ENCODE measurements at regions of chr1 and their contacts with region 1.

Region 1: GRCh38 chr1:221203224-221204054 is 324.2 kb downstream of the HLX start:
- DNase-seq: peak; percentile 94
- ATAC-seq: peak; percentile 95
- H3K4me3 ChIP-seq: no peak overlapping the region
- H3K27ac ChIP-seq: peak overlapping the region; percentile 8; the same call in 1 of the 2 replicates
- H3K4me1 ChIP-seq: peaks cover 17% of the 10 kb centered on the region
- H3K27me3 ChIP-seq: no peaks in the 10 kb centered on the region
- CTCF ChIP-seq: peak; percentile 87

Region 2: GRCh38 chr1:220810179-220810653 is 393.2 kb before region 1 on chr1:
- CTCF ChIA-PET with region 1: no interaction called
- POLR2A ChIA-PET with region 1: no interaction called
- intact Hi-C with region 1: loop called (anchors 5 kb)
- DNase-seq: peak; percentile 83
- ATAC-seq: peak; percentile 72
- H3K4me3 ChIP-seq: no peak overlapping the region
- H3K27ac ChIP-seq: no peak overlapping the region
- H3K4me1 ChIP-seq: no peaks in the 10 kb centered on the region
- H3K27me3 ChIP-seq: no peaks in the 10 kb centered on the region
- CTCF ChIP-seq: peak; percentile 95

Region 3: GRCh38 chr1:220879076-220879508 is 324.3 kb before region 1 on chr1 and contains the start of gene HLX:
- CTCF ChIA-PET with region 1: interaction called, 5 read pairs
- POLR2A ChIA-PET with region 1: no interaction called
- intact Hi-C with region 1: loop called (anchors 1 kb)
- DNase-seq: peak; percentile 96
- ATAC-seq: peak; percentile 89
- H3K4me3 ChIP-seq: peak within 1 kb of the TSS; percentile 85
- H3K27ac ChIP-seq: peak within 1 kb of the TSS; percentile 20
- H3K4me1 ChIP-seq: peaks cover 16% of the 10 kb centered on the region; the same call in 1 of the 2 replicates
- H3K27me3 ChIP-seq: no peaks in the 10 kb centered on the region
- CTCF ChIP-seq: no peak
- total RNA-seq, gene HLX: 4.0 and 8.1 TPM in 2 replicates

Region 4: GRCh38 chr1:220990427-220991339 is 212.8 kb before region 1 on chr1:
- CTCF ChIA-PET with region 1: no interaction called
- POLR2A ChIA-PET with region 1: no interaction called
- intact Hi-C with region 1: loop called (anchors 5 kb)
- DNase-seq: peak; percentile 85
- ATAC-seq: peak; percentile 87
- H3K4me3 ChIP-seq: no peak overlapping the region
- H3K27ac ChIP-seq: peak overlapping the region; percentile 56
- H3K4me1 ChIP-seq: peaks cover 20% of the 10 kb centered on the region
- H3K27me3 ChIP-seq: no peaks in the 10 kb centered on the region
- CTCF ChIP-seq: peak; percentile 63

Region 5: DNA sequence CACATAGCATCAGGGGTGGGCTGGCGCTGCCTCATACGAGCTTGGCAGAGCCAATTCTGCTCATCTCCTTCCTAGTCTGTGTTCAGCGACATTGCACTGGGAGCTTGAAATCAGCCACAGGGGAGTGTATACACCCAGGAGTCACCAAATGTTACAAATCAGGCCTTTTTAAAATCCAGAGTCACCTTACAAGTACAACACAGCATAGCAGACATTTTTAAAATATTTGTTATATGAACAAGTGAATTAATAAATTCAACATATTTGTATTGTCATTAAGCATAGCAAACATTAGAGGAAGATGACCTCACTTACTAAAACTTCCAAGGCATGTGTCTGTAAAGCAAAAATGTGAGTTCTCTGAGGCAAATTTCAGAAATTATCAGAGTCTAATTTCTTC is 114.2 kb before region 1 on chr1:
- CTCF ChIA-PET with region 1: interaction called, 5 read pairs
- POLR2A ChIA-PET with region 1: no interaction called
- intact Hi-C with region 1: loop called (anchors 1 kb)
- DNase-seq: peak; percentile 89
- ATAC-seq: peak; percentile 86
- H3K4me3 ChIP-seq: peak overlapping the region; percentile 17; the same call in 1 of the 2 replicates
- H3K27ac ChIP-seq: peak overlapping the region; percentile 30
- H3K4me1 ChIP-seq: peaks cover 54% of the 10 kb centered on the region
- H3K27me3 ChIP-seq: no peaks in the 10 kb centered on the region
- CTCF ChIP-seq: no peak

Region 6: DNA sequence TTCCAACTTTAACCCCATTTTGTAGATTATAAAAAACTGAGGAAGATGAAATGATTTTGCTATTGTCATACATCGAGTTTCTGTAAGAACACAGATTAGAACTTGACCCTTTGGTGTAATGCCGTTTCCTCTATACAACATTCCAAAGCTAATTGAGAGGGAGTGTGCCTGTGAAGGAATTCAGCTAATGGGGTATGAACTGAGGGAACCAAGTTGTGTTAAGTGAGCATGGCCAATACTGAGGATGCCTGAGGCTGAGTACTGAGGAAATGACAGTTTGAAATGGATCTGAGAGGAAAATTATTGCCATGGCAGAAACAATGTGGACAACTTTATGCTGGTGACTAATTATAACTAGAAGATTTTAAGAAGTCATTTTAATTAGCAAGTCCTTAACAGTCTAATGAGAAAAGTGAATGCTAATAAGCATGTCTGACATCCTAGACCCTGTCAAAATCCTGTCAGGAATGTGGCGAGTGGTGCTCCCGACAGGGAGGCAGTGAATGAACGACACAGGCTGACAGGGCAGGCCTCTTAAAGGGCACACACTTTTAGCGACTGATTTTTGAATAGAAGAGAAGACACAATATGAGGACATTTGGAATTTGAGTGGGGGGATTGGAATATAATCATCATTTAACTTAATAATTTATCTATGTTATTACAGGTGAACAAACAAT is 61.7 kb before region 1 on chr1:
- CTCF ChIA-PET with region 1: no interaction called
- POLR2A ChIA-PET with region 1: no interaction called
- intact Hi-C with region 1: no loop called
- DNase-seq: no peak
- ATAC-seq: no peak
- H3K4me3 ChIP-seq: no peak overlapping the region
- H3K27ac ChIP-seq: no peak overlapping the region
- H3K4me1 ChIP-seq: no peaks in the 10 kb centered on the region
- H3K27me3 ChIP-seq: no peaks in the 10 kb centered on the region
- CTCF ChIP-seq: no peak

Region 7: DNA sequence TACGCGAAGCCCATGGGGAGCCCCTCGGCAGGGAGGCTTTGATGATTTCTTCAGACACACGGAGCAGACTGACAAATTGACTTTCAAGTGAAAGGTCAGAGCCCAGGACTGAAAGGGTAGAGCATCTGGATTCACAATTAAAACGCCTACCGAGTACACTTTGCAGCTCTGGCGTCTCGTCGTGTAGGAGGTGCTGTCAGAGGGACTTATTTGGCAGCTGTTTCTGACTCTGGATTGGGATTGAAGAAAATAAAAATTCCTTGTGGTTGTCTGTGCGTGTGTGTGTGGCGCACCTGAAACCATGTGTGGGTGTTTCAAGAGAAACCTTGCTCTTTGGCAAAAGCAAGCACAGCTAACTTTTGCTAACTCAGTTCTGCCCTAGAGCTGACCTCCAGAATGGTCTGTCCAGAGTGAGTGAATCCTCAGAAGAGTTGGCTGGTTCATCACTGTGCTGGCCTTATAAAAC is 24.5 kb after region 1 on chr1:
- CTCF ChIA-PET with region 1: no interaction called
- POLR2A ChIA-PET with region 1: no interaction called
- intact Hi-C with region 1: no loop called
- DNase-seq: no peak
- ATAC-seq: no peak
- H3K4me3 ChIP-seq: no peak overlapping the region
- H3K27ac ChIP-seq: no peak overlapping the region
- H3K4me1 ChIP-seq: no peaks in the 10 kb centered on the region
- H3K27me3 ChIP-seq: no peaks in the 10 kb centered on the region
- CTCF ChIP-seq: no peak

Region 8: GRCh38 chr1:221239792-221240191 is 36.4 kb after region 1 on chr1:
- CTCF ChIA-PET with region 1: no interaction called
- POLR2A ChIA-PET with region 1: interaction called, 3 read pairs
- intact Hi-C with region 1: loop called (anchors 1 kb)
- DNase-seq: peak; percentile 89
- ATAC-seq: peak; percentile 97
- H3K4me3 ChIP-seq: peak overlapping the region; percentile 16; the same call in 1 of the 2 replicates
- H3K27ac ChIP-seq: peak overlapping the region; percentile 69
- H3K4me1 ChIP-seq: peaks cover 29% of the 10 kb centered on the region
- H3K27me3 ChIP-seq: no peaks in the 10 kb centered on the region
- CTCF ChIP-seq: no peak